ENCODE measurements at regions of chr10 and their contacts with region 1.

Region 1: GRCh38 chr10:94443047-94443446 is 40.7 kb downstream of the TBC1D12 start:
- H3K4me3 ChIP-seq: no peak overlapping the region
- H3K27ac ChIP-seq: no peak overlapping the region
- H3K4me1 ChIP-seq: no peaks in the 10 kb centered on the region
- CTCF ChIP-seq: no peak

Region 2: DNA sequence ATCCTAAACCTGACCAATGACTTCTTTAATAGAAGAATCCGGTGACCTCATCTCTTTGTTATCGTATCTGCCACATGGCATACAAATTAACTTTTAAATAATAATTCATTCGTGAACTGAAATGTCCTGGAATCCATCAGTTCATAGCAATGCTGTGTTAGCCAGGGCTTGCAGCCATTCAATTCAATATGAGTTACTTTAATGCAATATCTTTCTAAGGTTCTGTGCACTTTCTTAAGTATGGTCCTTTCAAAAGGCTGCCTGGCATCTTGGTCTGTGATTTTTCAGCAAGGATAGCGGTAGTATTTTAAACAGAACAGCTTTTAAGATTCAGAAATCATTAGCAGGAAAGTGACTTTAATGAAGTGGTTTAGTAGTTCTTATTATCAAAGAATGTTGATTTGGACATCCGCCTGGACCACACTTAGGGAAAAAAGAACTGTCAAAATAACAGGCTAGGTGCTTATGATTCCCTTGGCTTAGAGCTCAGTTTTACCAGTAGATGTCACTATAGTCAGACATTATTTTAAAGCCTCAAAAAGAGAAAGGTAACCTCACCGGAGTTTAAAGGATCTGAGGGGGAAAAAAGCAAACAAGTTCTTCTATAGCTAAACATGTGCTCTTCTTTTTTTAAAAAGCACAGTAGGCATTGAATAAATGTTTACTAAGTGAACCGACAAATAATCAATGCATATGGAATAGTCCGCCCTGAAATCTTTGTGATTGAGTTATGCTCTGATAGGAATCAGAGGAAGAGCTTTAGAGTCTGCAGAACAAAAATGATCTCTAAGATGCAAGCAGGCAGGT is 526.6 kb before region 1 on chr10:
- CTCF ChIA-PET with region 1: interaction called, 13 read pairs
- POLR2A ChIA-PET with region 1: no interaction called
- H3K4me3 ChIP-seq: no peak overlapping the region
- H3K27ac ChIP-seq: no peak overlapping the region
- H3K4me1 ChIP-seq: no peaks in the 10 kb centered on the region
- CTCF ChIP-seq: no peak

Region 3: GRCh38 chr10:94183666-94184264 is 259.3 kb before region 1 on chr10:
- CTCF ChIA-PET with region 1: no interaction called
- POLR2A ChIA-PET with region 1: no interaction called
- H3K4me3 ChIP-seq: no peak overlapping the region
- H3K27ac ChIP-seq: no peak overlapping the region
- H3K4me1 ChIP-seq: no peaks in the 10 kb centered on the region
- CTCF ChIP-seq: no peak

Region 4: DNA sequence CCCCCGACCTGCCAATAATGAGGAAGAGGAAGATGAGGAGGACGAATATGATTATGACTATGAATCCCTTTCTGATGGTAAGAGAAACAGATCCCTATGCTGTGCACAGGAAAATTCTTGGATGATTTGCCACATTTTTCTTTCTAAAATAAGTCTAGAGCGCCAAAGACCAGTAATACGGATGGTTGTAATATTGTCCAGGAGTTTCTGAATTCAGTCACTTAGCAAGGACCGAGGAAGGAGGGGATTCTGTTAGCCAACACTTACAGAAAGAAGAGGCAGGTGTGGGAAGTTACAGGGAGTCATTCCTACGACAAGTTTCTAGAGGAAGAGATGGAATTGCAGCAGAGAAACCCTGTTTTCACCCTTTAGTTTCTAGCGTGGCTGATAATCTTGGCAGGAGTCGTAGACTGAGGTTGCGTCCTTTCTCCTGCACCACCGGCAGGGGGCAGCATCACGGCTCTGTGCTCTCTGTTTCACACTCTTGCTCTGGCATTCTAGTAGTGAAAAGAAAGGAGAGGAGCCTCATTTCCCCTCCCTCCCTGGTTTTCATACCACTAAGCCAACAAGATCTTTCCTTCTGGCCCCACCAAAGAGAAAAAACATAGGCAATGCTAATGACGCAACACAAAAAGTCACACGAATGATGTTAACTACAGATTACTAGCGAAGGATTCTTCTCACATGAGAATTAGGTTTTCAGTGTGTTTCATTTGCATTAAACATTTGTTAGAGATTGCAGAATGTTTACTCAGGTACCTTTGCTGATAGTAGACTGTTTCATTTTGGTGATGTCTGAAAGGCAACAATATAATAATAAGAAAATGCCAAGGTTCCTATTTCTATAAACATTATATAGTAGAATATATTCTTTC is 163.0 kb before region 1 on chr10:
- CTCF ChIA-PET with region 1: interaction called, 19 read pairs
- POLR2A ChIA-PET with region 1: no interaction called
- H3K4me3 ChIP-seq: no peak overlapping the region
- H3K27ac ChIP-seq: no peak overlapping the region
- H3K4me1 ChIP-seq: no peaks in the 10 kb centered on the region
- CTCF ChIP-seq: peak; percentile 74

Region 5: DNA sequence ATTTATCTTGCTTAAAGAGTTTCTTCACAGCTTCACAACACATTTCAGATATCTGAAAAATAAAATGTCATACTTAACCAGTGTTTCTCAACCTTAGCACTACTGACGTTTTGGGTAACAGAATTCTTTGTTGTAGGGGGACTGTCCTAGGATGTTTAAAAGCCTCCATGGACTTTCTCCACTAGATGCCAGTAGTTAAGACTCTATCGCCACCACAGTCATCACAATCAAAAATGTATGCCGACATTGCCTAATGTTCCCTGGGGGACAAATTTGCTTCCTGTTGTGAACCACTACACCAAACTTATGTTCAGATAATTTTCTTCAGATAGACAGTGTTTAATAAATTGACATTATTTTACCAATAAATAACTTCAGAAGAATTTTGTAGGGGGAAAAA is 93.7 kb before region 1 on chr10:
- CTCF ChIA-PET with region 1: interaction called, 17 read pairs
- POLR2A ChIA-PET with region 1: no interaction called
- H3K4me3 ChIP-seq: no peak overlapping the region
- H3K27ac ChIP-seq: no peak overlapping the region
- H3K4me1 ChIP-seq: no peaks in the 10 kb centered on the region
- CTCF ChIP-seq: no peak

Region 6: GRCh38 chr10:94429049-94429707 is 13.9 kb before region 1 on chr10:
- CTCF ChIA-PET with region 1: interaction called, 31 read pairs
- POLR2A ChIA-PET with region 1: interaction called, 4 read pairs
- H3K4me3 ChIP-seq: no peak overlapping the region
- H3K27ac ChIP-seq: no peak overlapping the region
- H3K4me1 ChIP-seq: peaks cover 9% of the 10 kb centered on the region
- CTCF ChIP-seq: no peak

Region 7: DNA sequence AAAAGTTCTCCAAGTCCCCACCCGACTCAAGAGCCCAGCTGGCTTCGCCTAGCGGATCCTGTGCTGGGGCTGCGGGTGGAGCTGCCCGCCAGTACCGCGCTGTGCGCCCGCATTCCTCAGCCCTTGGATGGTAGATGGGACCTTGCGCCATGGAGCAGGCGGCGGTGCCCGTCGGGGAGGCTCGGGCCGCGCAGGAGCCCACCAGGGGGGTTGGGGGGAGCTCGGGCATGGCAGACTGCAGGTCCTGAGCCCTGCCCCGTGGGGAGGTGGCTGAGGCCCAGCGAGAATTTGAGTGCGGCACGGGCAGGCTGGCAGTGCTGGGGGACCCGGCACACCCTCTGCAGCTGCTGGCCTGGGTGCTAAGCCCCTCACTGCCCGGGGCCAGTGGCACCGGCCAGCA is 16.3 kb after region 1 on chr10:
- CTCF ChIA-PET with region 1: interaction called, 18 read pairs
- POLR2A ChIA-PET with region 1: no interaction called
- H3K4me3 ChIP-seq: no peak overlapping the region
- H3K27ac ChIP-seq: no peak overlapping the region
- H3K4me1 ChIP-seq: no peaks in the 10 kb centered on the region
- CTCF ChIP-seq: no peak

Region 8: GRCh38 chr10:94533027-94533426 is 90.0 kb after region 1 on chr10:
- CTCF ChIA-PET with region 1: no interaction called
- POLR2A ChIA-PET with region 1: no interaction called
- H3K4me3 ChIP-seq: no peak overlapping the region
- H3K27ac ChIP-seq: no peak overlapping the region
- H3K4me1 ChIP-seq: no peaks in the 10 kb centered on the region
- CTCF ChIP-seq: no peak

Region 9: GRCh38 chr10:94608559-94608958 is 165.5 kb after region 1 on chr10:
- CTCF ChIA-PET with region 1: no interaction called
- POLR2A ChIA-PET with region 1: no interaction called
- H3K4me3 ChIP-seq: no peak overlapping the region
- H3K27ac ChIP-seq: no peak overlapping the region
- H3K4me1 ChIP-seq: no peaks in the 10 kb centered on the region
- CTCF ChIP-seq: no peak